ENCODE measurements at regions of chr19 and their contacts with region 1.

Region 1: DNA sequence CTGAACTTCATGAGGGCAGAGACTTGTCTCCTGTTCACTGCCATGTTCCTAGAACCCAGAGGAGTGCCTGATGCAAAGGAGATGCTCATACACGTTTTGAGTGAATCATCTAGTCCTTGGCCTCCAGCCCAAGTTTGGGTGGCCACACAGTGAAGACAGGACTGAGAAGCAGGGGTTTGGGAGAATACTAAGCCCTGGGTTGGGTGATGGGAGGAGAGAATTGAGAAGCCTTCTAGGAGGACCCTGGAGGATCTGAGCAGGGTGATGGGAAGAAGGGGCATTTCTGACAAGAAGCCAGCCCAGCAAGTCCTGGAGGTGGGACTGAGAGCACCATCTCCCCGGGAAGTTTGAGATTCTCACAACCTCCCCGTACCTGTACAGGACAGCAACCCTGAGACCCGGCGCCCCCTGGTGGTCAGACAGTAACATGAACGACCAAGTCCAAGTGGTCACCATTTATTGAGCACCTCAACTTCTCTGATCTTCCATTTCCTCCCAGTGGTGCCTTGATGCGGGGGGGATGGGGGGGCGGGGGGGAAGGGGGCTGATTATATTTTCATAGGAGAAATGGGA is 11.0 kb downstream of the CTU1 start:
- DNase-seq: peak; percentile 77
- ATAC-seq: peak; percentile 40
- H3K4me3 ChIP-seq: no peak overlapping the region
- H3K27ac ChIP-seq: no peak overlapping the region
- H3K4me1 ChIP-seq: peaks cover 28% of the 10 kb centered on the region
- H3K27me3 ChIP-seq: no peaks in the 10 kb centered on the region
- CTCF ChIP-seq: peak; percentile 79

Region 2: GRCh38 chr19:50750010-50750409 is 347.2 kb before region 1 on chr19:
- CTCF ChIA-PET with region 1: interaction called, 22 read pairs
- POLR2A ChIA-PET with region 1: no interaction called
- intact Hi-C with region 1: no loop called
- DNase-seq: no peak
- ATAC-seq: no peak
- H3K4me3 ChIP-seq: no peak overlapping the region
- H3K27ac ChIP-seq: no peak overlapping the region
- H3K4me1 ChIP-seq: no peaks in the 10 kb centered on the region
- H3K27me3 ChIP-seq: peaks cover 33% of the 10 kb centered on the region
- CTCF ChIP-seq: no peak

Region 3: DNA sequence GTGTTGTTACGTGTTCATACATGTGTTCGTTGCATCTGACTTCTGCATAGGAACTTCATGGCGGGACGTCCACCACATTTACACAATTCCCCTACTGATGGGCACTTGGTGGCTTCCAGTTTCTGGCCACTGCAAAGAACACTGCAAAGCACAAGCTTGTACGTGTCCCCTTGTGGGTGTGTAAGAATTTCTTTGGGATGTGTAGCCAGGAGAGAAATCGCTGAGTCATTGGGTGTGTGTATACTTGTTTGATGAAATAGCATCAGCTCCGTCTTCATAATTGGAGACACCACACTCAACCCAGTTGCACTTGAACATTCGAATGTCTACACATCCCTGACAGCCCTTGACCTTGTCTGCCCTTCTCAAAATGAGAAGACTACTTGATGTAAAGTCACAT is 163.6 kb before region 1 on chr19:
- CTCF ChIA-PET with region 1: interaction called, 7 read pairs
- POLR2A ChIA-PET with region 1: no interaction called
- intact Hi-C with region 1: loop called (anchors 1 kb)
- DNase-seq: peak; percentile 96
- ATAC-seq: peak; percentile 39
- H3K4me3 ChIP-seq: no peak overlapping the region
- H3K27ac ChIP-seq: peak overlapping the region; percentile 88
- H3K4me1 ChIP-seq: peaks cover 38% of the 10 kb centered on the region
- H3K27me3 ChIP-seq: no peaks in the 10 kb centered on the region
- CTCF ChIP-seq: no peak

Region 4: GRCh38 chr19:51070861-51071406 is 26.3 kb before region 1 on chr19:
- CTCF ChIA-PET with region 1: interaction called, 3 read pairs
- POLR2A ChIA-PET with region 1: no interaction called
- intact Hi-C with region 1: loop called (anchors 1 kb)
- DNase-seq: peak; percentile 91
- ATAC-seq: peak; percentile 85
- H3K4me3 ChIP-seq: peak overlapping the region; percentile 21; the same call in 1 of the 2 replicates
- H3K27ac ChIP-seq: peak overlapping the region; percentile 89
- H3K4me1 ChIP-seq: peaks cover 23% of the 10 kb centered on the region
- H3K27me3 ChIP-seq: no peaks in the 10 kb centered on the region
- CTCF ChIP-seq: no peak